ENCODE measurements at regions of chr20 and their contacts with region 1.

Region 1: GRCh38 chr20:5191829-5192569 is 65.2 kb downstream of the CDS2 start:
- DNase-seq: peak; percentile 55
- ATAC-seq: peak; percentile 75
- H3K4me3 Mint-ChIP-seq: no peak overlapping the region
- H3K27ac Mint-ChIP-seq: peak overlapping the region; percentile 64
- H3K4me1 Mint-ChIP-seq: peaks cover 20% of the 10 kb centered on the region
- H3K27me3 Mint-ChIP-seq: no peaks in the 10 kb centered on the region

Region 2: GRCh38 chr20:5119435-5120188 is 72.4 kb before region 1 on chr20 and contains the start of gene PCNA:
- CTCF ChIA-PET with region 1: interaction called, 102 read pairs
- DNase-seq: peak; percentile 99
- ATAC-seq: peak; percentile 90
- H3K4me3 Mint-ChIP-seq: peak within 1 kb of the TSS; percentile 90
- H3K27ac Mint-ChIP-seq: peak within 1 kb of the TSS; percentile 97
- H3K4me1 Mint-ChIP-seq: peaks cover 61% of the 10 kb centered on the region
- H3K27me3 Mint-ChIP-seq: no peaks in the 10 kb centered on the region
- total RNA-seq, gene PCNA: 548 to 587 TPM

Region 3: GRCh38 chr20:5126512-5127203 is 65.3 kb before region 1 on chr20 and contains the start of gene CDS2:
- CTCF ChIA-PET with region 1: interaction called, 102 read pairs
- DNase-seq: peak; percentile 100
- ATAC-seq: peak; percentile 90
- H3K4me3 Mint-ChIP-seq: peak within 1 kb of the TSS; percentile 97
- H3K27ac Mint-ChIP-seq: peak within 1 kb of the TSS; percentile 96
- H3K4me1 Mint-ChIP-seq: peaks cover 54% of the 10 kb centered on the region
- H3K27me3 Mint-ChIP-seq: no peaks in the 10 kb centered on the region
- total RNA-seq, gene CDS2: 62.2 to 63.5 TPM

Region 4: GRCh38 chr20:5215672-5216304 is 23.8 kb after region 1 on chr20:
- CTCF ChIA-PET with region 1: interaction called, 11 read pairs
- DNase-seq: no peak
- ATAC-seq: no peak
- H3K4me3 Mint-ChIP-seq: no peak overlapping the region
- H3K27ac Mint-ChIP-seq: no peak overlapping the region
- H3K4me1 Mint-ChIP-seq: no peaks in the 10 kb centered on the region
- H3K27me3 Mint-ChIP-seq: no peaks in the 10 kb centered on the region

Region 5: GRCh38 chr20:5297280-5298004 is 105.4 kb after region 1 on chr20:
- CTCF ChIA-PET with region 1: no interaction called
- DNase-seq: no peak
- ATAC-seq: no peak
- H3K4me3 Mint-ChIP-seq: no peak overlapping the region
- H3K27ac Mint-ChIP-seq: no peak overlapping the region
- H3K4me1 Mint-ChIP-seq: peaks cover 10% of the 10 kb centered on the region
- H3K27me3 Mint-ChIP-seq: peaks cover 30% of the 10 kb centered on the region